ENCODE measurements at regions of chr10 and their contacts with region 1.

Region 1: DNA sequence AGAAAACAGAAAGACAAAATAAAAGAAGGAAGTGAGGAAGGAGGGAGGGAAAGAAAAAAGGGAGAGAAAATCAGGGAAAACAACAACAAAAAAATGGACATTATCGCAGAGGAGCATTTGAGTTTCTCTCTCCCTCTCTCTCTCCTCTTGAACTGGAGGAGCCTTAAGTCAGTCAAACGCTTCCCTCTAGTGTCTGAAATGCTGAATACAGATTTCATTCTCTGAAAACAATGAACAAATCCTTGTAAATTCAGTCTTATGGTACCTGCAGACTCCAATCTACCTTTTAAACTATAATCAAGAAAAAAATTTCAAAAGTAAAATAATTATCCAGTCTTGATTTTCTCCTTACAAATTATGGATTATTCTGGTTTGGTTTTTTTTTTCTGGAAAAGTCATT is 89.2 kb upstream of the PFKP start:
- DNase-seq: no peak
- H3K4me3 Mint-ChIP-seq: no peak overlapping the region
- H3K27ac Mint-ChIP-seq: no peak overlapping the region
- H3K4me1 Mint-ChIP-seq: no peaks in the 10 kb centered on the region
- H3K27me3 Mint-ChIP-seq: no peaks in the 10 kb centered on the region

Region 2: DNA sequence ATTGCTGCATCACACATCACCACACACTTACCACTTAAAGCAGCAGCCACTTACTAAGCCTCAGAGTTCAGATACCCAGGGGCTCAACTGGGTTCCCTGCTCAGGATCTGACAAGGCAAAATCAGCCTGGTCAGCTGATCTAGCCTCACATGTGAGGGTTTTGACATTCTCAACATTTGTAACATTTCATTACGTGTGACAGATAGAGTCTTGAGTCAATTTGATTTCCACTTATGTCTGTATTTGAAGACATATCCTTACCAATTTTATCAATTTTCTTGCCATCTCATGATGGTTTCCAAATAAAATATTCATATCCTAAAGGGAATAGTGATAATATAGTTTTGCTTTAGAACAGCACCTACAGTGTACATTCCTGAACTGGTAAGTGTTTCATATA is 405.5 kb before region 1 on chr10:
- intact Hi-C with region 1: no loop called
- DNase-seq: no peak
- H3K4me3 Mint-ChIP-seq: no peak overlapping the region
- H3K27ac Mint-ChIP-seq: no peak overlapping the region
- H3K4me1 Mint-ChIP-seq: no peaks in the 10 kb centered on the region
- H3K27me3 Mint-ChIP-seq: no peaks in the 10 kb centered on the region

Region 3: DNA sequence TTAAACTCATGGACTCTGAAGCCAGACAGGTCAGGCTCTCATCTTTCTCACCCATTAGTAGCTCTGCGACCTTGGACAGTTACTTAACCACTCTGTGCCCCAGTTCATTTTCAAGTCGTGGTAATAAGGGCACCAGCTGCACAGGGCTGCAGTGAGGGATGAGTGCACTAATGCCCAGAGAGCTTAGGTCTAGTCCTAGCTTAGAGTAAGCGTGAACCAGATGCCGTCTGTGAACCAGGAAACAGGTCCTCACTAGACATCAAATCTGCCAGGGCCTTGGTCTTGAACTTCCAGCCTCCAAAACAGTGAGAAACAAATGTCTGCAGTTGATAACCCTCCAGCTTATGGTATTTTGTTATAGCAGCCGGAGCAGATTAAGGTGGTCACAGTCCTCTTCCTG is 133.2 kb before region 1 on chr10:
- intact Hi-C with region 1: loop called (anchors 10 kb)
- DNase-seq: no peak
- H3K4me3 Mint-ChIP-seq: no peak overlapping the region
- H3K27ac Mint-ChIP-seq: no peak overlapping the region
- H3K4me1 Mint-ChIP-seq: no peaks in the 10 kb centered on the region
- H3K27me3 Mint-ChIP-seq: peaks cover 4% of the 10 kb centered on the region

Region 4: GRCh38 chr10:2899246-2899951 is 78.7 kb before region 1 on chr10:
- intact Hi-C with region 1: no loop called
- DNase-seq: no peak
- H3K4me3 Mint-ChIP-seq: no peak overlapping the region
- H3K27ac Mint-ChIP-seq: no peak overlapping the region
- H3K4me1 Mint-ChIP-seq: no peaks in the 10 kb centered on the region
- H3K27me3 Mint-ChIP-seq: peaks cover 10% of the 10 kb centered on the region

Region 5: GRCh38 chr10:2927958-2928840 is 49.9 kb before region 1 on chr10:
- intact Hi-C with region 1: loop called (anchors 1 kb)
- DNase-seq: peak; percentile 46
- H3K4me3 Mint-ChIP-seq: no peak overlapping the region
- H3K27ac Mint-ChIP-seq: peak overlapping the region; percentile 37
- H3K4me1 Mint-ChIP-seq: peaks cover 8% of the 10 kb centered on the region
- H3K27me3 Mint-ChIP-seq: peaks cover 15% of the 10 kb centered on the region

Region 6: DNA sequence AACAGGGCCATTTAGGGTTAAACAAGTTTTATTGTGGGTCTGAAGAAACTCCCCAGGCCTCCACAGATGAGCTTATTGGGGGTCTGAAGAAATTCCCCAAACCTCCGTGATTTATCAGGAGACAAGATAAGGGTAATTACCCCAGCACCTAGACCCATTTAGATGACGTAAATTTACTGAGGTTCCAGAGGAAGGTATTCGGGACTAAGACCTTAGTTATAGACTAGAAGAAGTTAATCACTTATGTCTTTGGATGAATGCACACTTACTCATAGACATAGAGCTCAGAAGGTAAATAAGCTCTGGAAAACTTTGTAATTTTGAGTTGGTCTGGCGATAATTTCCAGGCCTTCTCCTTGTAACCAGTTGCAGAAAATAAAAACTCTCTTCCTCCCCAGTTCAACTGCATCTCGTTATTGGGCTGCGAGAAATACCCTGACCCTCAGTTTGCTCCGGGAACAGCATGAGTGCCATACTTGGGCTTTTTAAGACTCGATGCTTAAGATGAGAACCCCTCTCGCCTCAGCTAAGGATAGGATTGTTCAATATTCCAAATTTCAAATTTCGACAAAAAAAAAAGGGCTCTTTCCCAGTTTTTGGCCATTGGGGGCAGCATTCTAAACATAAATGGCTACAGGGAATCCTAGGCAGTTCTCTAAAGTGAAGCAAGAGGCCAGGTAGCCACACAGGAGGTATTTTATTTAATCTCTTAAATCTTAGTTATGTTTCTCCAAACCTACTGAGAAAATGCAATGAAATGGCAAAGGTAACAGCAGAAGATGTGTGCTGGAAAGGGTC is 14.5 kb after region 1 on chr10:
- intact Hi-C with region 1: no loop called
- DNase-seq: no peak
- H3K4me3 Mint-ChIP-seq: no peak overlapping the region
- H3K27ac Mint-ChIP-seq: no peak overlapping the region
- H3K4me1 Mint-ChIP-seq: no peaks in the 10 kb centered on the region
- H3K27me3 Mint-ChIP-seq: peaks cover 2% of the 10 kb centered on the region

Region 7: DNA sequence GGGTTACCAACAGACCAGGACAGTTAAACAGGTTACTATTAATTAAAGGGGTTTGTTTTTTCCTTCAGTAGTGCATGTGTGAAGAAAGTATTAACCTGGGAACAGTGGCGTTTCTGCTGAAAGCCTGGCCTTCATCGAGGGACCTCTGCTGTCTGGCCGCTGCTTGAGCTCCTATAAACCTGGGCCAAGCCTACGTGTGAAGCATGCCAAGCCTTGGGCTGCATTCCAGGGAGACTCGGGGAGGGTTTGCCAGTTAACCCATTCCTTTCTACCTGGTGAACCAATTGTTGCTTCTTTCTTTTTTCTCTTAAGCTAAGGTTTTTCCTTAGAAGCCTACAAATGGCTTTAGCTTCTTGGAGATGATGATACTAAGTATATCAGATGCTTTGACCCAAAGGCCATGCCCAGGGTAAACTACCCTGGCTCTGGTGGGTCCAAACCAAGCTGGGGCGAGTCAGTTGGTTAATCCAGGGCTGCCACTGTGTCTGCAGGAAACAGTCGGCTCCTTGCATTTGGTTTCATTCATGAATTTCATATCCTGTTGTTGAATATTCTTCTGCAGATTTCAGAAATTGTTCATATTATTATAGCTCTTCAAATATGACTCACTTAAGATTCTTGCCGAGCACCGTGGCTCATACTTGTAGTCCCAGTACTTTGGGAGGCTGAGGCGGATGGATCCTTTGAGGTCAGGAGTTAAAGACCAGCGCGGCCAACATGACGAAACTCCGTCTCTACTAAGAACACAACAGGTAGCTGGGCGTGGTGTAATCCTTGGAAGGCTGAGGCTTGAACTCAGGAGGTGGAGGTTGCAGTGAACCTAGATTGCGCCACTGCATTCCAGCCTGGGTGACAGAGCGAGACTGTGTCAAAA is 113.0 kb after region 1 on chr10:
- intact Hi-C with region 1: no loop called
- DNase-seq: peak; percentile 23
- H3K4me3 Mint-ChIP-seq: peak overlapping the region; percentile 31
- H3K27ac Mint-ChIP-seq: peak overlapping the region; percentile 89
- H3K4me1 Mint-ChIP-seq: peaks cover 70% of the 10 kb centered on the region
- H3K27me3 Mint-ChIP-seq: no peaks in the 10 kb centered on the region

Measured in activated T-helper 1 cell treated with anti-CD3 and anti-CD28 coated beads, Interleukin-12 subunit alpha, Interleukin-12 subunit beta, Interleukin-2, Interleukin-4 antibody, amounts not matched to agents 30 ng/mL and 10 ng/mL and 1 ng/mL, durations not matched to agents 14 hours and 24 hours and 36 hours (primary cell).